CD4-positive, alpha-beta memory T cell (primary cell): ENCODE measurements at regions of chr11 and their contacts with region 1.

Region 1: GRCh38 chr11:64553551-64554201 is 37.3 kb upstream of the SLC22A12 start:
- DNase-seq: peak in 4 of 5 donors; percentile 31 to 45 (median 42)
- H3K4me3 ChIP-seq: no peak overlapping the region
- H3K4me3 Mint-ChIP-seq: no peak overlapping the region
- H3K27ac ChIP-seq: no peak overlapping the region
- H3K27ac Mint-ChIP-seq: peak overlapping the region in 1 of 7 donors; percentile 48
- H3K4me1 ChIP-seq: no peaks in the 10 kb centered on the region
- H3K4me1 Mint-ChIP-seq: no peaks in the 10 kb centered on the region
- H3K27me3 ChIP-seq: no peaks in the 10 kb centered on the region
- H3K27me3 Mint-ChIP-seq: peaks cover 2 to 7% of the 10 kb centered on the region in 2 donors

Region 2: GRCh38 chr11:64652586-64653387 is 99.1 kb after region 1 on chr11:
- CTCF ChIA-PET with region 1: interaction called, 3 read pairs
- POLR2A ChIA-PET with region 1: no interaction called
- intact Hi-C with region 1: loop called (anchors 1 kb)
- DNase-seq: peak; percentile 54 to 65 (median 62)
- H3K4me3 ChIP-seq: no peak overlapping the region
- H3K4me3 Mint-ChIP-seq: no peak overlapping the region
- H3K27ac ChIP-seq: no peak overlapping the region
- H3K27ac Mint-ChIP-seq: peak overlapping the region in 2 of 7 donors; percentile 18 to 64
- H3K4me1 ChIP-seq: no peaks in the 10 kb centered on the region
- H3K4me1 Mint-ChIP-seq: peaks cover 0 to 5% (median 2%) of the 10 kb centered on the region in 4 donors
- H3K27me3 ChIP-seq: no peaks in the 10 kb centered on the region
- H3K27me3 Mint-ChIP-seq: peaks cover 6 to 14% of the 10 kb centered on the region in 2 donors

Region 3: DNA sequence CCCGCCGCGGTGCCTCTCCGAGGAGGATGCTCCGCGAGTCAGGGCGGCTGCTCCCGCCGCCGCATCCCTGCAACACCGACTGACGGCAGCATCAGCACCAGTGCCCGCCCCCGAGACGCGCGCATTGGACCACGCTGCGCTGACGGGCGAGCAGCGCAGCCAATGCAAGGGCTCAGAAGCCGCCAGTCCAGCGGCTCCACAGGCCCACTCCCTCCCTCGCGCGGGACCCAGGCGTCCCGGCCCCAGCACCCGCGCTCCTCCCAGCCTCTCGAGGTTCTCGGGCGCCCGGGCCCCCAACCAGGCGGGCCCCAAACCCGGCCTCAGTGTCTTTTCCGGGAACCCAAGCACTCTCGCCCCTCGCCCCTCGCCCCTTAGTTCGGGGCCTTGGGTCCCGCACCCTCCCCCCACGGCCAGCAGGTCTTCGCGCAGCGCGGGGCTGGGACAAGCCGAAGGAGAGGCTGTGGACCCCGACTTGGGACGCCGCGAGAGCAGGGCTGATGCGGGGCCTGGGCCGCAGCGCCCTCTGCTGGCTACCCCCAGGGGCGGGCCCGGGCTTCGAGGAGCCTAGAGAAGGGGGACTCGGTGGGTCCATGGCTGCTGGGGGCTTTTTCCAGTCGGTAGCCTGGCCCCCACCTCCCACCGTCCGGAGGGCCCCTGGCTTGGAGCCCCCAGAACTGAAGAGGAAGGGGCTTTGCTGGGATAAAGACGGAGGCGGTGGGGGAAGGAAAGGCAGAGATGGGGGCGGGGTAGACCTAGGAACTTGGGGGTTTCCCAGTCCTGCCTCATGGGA is 169.6 kb after region 1 on chr11 and contains the start of gene NRXN2:
- CTCF ChIA-PET with region 1: no interaction called
- POLR2A ChIA-PET with region 1: no interaction called
- intact Hi-C with region 1: loop called (anchors 1 kb)
- DNase-seq: peak; percentile 82 to 87 (median 84)
- H3K4me3 ChIP-seq: peak within 1 kb of the TSS; percentile 47 to 67
- H3K4me3 Mint-ChIP-seq: peak within 1 kb of the TSS; percentile 57 to 77 (median 69)
- H3K27ac ChIP-seq: peak within 1 kb of the TSS; percentile 82
- H3K27ac Mint-ChIP-seq: peak within 1 kb of the TSS; percentile 15 to 81 (median 63)
- H3K4me1 ChIP-seq: peaks cover 8% of the 10 kb centered on the region
- H3K4me1 Mint-ChIP-seq: peaks cover 11 to 30% (median 15%) of the 10 kb centered on the region in 4 donors
- H3K27me3 ChIP-seq: peaks cover 11% of the 10 kb centered on the region
- H3K27me3 Mint-ChIP-seq: peaks cover 15 to 18% of the 10 kb centered on the region in 2 donors
- total RNA-seq, gene NRXN2: 0.30 TPM in 1 of 2 experiments, not detected in the other